Right cardiac atrium (tissue), 5 donors: ENCODE measurements at regions of chr15 and their contacts with region 1.

Region 1: DNA sequence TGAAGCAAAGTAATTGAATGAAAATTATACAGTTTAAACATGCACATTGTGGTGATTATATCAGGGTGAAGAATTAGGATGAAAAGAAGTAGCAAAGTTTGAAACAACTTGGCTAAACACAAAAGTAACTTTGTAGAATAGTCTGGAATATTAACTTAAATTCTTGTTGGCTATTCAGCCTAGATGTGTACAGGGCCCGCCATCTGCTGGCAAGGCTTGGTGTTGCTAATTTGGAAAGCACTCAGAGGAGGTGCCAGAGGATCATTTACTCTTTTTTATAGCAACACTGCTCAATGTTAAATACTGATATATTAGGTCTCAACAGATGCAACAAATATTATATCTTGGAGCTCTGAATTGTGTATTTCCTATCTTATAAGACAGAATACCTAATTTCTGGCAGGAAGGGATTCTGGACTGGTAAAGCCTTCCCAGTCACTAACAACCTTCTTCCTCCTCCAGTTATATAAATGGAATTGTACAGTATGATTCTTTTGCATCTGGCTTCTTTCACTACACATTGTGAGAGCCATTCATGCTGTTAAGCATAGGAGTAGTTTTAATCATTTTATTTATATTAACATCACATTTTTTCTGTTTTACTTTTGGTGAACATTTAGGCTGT is 36.1 kb downstream of the TTC23 start:
- DNase-seq: peak; percentile 81 to 95 (median 88)
- ATAC-seq: peak; percentile 82 to 83
- H3K4me3 ChIP-seq: no peak overlapping the region
- H3K27ac ChIP-seq: no peak overlapping the region
- H3K4me1 ChIP-seq: no peaks in the 10 kb centered on the region
- H3K27me3 ChIP-seq: no peaks in the 10 kb centered on the region

Region 2: DNA sequence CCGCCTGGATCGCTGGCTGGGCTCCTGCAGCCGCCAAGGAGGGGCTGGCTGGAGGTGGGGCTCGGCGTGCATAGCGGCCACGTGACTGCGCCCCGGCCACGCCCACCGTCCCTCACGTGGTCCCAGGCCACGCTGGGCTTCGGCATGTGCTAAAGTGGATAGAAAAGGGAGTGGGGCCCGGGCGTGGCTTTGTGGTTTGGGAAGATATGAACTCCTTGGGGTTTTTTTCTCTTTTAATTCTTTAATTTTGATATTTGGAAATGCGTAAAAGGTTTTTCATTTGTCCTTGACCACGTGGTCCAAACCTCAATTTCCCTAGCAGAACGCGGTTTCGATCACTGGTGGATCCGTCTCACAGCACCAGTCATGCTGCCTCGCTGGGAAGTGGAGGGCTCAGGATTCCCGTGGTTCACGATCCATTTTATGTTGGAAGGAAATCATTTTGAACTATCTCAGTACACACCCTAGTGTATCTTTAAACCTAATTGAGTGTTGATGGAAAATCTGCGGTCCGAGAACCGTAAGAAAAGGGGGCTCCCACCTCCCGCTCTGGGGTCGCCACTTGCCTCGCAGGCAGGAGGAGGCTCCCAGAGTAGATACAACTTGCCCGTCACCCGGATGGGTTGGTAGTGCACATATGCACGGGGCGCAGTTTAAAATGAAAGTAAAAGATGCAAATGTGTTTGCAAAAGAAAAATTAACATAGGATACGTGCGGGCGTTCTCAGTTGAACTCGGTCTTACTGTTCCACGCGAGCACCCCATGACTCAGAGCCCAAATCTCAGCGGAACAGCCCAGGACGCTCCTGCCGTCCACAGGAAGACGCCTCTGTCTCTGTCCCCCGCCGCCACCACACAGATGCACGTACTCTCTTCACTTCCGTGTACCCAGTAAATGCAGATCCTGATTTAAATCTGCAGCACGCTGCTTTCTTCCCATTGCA is 347.6 kb before region 1 on chr15:
- intact Hi-C with region 1: loop called in 1 of 4 experiments (anchors 10 kb)
- DNase-seq: peak; percentile 86 to 94 (median 92)
- ATAC-seq: peak; percentile 93
- H3K4me3 ChIP-seq: peak overlapping the region; percentile 73
- H3K27ac ChIP-seq: peak overlapping the region; percentile 53
- H3K4me1 ChIP-seq: peaks cover 8% of the 10 kb centered on the region
- H3K27me3 ChIP-seq: no peaks in the 10 kb centered on the region

Region 3: GRCh38 chr15:99104788-99105513 is 108.3 kb before region 1 on chr15 and contains the start of gene SYNM:
- intact Hi-C with region 1: loop called (anchors 2 to 5 kb)
- DNase-seq: peak; percentile 81 to 92 (median 92)
- ATAC-seq: peak; percentile 87 to 88
- H3K4me3 ChIP-seq: peak within 1 kb of the TSS; percentile 26
- H3K27ac ChIP-seq: peak within 1 kb of the TSS; percentile 71
- H3K4me1 ChIP-seq: no peaks in the 10 kb centered on the region
- H3K27me3 ChIP-seq: no peaks in the 10 kb centered on the region
- total RNA-seq, gene SYNM: 184 to 463 (median 218) TPM

Region 4: GRCh38 chr15:99138491-99138982 is 74.8 kb before region 1 on chr15:
- intact Hi-C with region 1: loop called in 1 of 4 experiments (anchors 2 kb)
- DNase-seq: no peak
- ATAC-seq: peak in 1 of 2 donors; percentile 38
- H3K4me3 ChIP-seq: no peak overlapping the region
- H3K27ac ChIP-seq: no peak overlapping the region
- H3K4me1 ChIP-seq: no peaks in the 10 kb centered on the region
- H3K27me3 ChIP-seq: no peaks in the 10 kb centered on the region

Region 5: DNA sequence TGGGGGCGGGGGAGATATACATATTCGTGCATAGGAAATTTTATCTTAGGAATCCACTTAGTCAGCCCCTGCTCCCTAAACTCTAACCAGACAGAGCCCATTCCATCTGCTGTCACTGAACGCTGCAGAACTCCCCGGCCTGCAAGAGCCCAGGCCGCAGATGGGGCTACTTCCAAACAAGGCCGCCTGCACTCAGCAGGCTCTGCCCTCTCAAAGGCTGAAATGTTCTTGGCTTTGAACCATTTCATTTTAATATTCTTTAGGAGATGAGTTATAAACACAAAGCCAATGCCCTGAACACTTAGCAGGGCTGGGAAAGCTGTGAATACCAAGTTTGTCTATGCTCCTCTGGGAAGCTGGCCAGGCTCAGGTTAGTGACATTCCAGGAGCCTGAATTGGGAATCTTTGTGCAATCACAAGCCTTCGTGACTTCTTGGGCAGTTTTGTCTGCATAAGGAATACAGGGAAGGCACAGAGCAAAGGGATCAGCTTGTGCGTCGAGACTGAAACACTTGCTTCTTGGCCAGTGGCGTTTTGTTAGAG is 43.5 kb before region 1 on chr15:
- intact Hi-C with region 1: loop called in 2 of 4 experiments (anchors 5 to 10 kb)
- DNase-seq: peak in 2 of 3 donors; percentile 57 to 59
- ATAC-seq: peak; percentile 28 to 72
- H3K4me3 ChIP-seq: no peak overlapping the region
- H3K27ac ChIP-seq: peak overlapping the region; percentile 92
- H3K4me1 ChIP-seq: peaks cover 13% of the 10 kb centered on the region
- H3K27me3 ChIP-seq: no peaks in the 10 kb centered on the region